MCF 10A (cell line): ENCODE measurements at regions of chr12 and their contacts with region 1.

Region 1: GRCh38 chr12:104286538-104287482 is 16.7 kb upstream of the EID3 start:
- DNase-seq: peak; percentile 99
- H3K4me3 Mint-ChIP-seq: peak overlapping the region; percentile 98
- H3K27ac Mint-ChIP-seq: peak overlapping the region; percentile 100
- H3K4me1 Mint-ChIP-seq: peaks cover 14% of the 10 kb centered on the region
- H3K27me3 Mint-ChIP-seq: no peaks in the 10 kb centered on the region
- CTCF ChIP-seq: no peak

Region 2: GRCh38 chr12:104137913-104138796 is 148.7 kb before region 1 on chr12 and contains the start of gene NFYB:
- CTCF ChIA-PET with region 1: interaction called, 4 read pairs
- POLR2A ChIA-PET with region 1: interaction called, 62 read pairs
- intact Hi-C with region 1: loop called (anchors 5 kb)
- DNase-seq: peak; percentile 99
- H3K4me3 Mint-ChIP-seq: peak within 1 kb of the TSS; percentile 78
- H3K27ac Mint-ChIP-seq: peak within 1 kb of the TSS; percentile 46
- H3K4me1 Mint-ChIP-seq: peaks cover 8% of the 10 kb centered on the region
- H3K27me3 Mint-ChIP-seq: no peaks in the 10 kb centered on the region
- CTCF ChIP-seq: no peak
- total RNA-seq, gene NFYB: 24.8 and 27.0 TPM in 2 replicates

Region 3: DNA sequence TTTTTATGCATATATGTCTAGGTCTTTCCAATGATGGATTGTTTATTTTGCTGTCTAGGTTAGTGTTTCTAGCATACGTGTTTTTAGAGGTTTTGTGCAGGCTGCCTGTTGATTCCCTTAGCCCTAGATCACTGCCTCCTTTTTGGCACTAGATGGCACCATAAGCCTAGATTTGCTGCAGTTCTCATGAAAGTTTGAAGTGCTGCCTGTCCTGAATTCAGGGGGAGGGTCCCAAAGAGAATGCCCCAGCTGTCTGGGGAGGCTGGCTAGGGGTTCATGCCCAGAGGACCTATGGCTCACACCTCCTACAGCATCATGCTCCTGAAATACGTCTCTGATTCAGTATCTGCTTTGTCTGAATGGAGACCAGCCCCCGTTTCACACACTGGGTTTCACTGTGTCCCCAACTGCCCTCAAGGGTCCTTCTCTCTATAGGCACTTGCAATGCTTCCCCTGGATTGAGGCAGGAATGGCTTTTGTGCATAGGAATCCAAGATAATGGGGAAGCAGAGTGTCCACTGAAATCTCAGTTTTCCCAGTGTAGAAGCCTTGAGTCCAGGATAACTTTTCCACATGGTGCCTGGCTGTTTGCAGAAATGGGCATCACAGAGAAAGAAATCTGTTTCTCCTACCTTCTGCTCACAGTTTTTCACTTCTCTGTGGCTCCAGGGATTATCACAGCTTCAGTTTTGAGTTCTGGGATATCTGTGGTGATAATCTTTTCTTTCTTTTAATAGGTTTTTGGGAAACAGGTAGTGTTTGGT is 85.4 kb before region 1 on chr12:
- CTCF ChIA-PET with region 1: interaction called, 25 read pairs
- POLR2A ChIA-PET with region 1: interaction called, 58 read pairs
- intact Hi-C with region 1: loop called (anchors 1 kb)
- DNase-seq: peak; percentile 74
- H3K4me3 Mint-ChIP-seq: no peak overlapping the region
- H3K27ac Mint-ChIP-seq: no peak overlapping the region
- H3K4me1 Mint-ChIP-seq: peaks cover 18% of the 10 kb centered on the region
- H3K27me3 Mint-ChIP-seq: no peaks in the 10 kb centered on the region
- CTCF ChIP-seq: peak; percentile 86

Region 4: DNA sequence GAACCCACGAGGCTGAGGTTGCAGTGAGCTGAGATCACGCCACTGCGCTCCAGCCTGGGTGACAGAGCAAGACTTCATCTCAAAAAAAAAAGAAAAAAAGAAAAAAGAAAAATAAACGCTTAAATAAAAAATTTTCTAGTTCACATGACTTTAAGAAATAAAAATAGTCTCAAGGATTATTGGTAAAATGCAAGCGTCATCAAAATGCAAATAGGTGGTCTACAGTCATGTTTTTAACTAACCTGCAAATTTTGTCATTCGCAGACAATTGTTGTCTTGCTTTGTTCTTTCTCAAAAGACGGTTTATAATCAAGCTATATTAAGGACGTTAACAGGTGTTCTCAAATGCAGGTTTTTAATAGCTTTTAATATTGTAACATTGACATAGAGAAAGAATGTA is 48.9 kb before region 1 on chr12:
- CTCF ChIA-PET with region 1: no interaction called
- POLR2A ChIA-PET with region 1: no interaction called
- intact Hi-C with region 1: no loop called
- DNase-seq: no peak
- H3K4me3 Mint-ChIP-seq: no peak overlapping the region
- H3K27ac Mint-ChIP-seq: no peak overlapping the region
- H3K4me1 Mint-ChIP-seq: no peaks in the 10 kb centered on the region
- H3K27me3 Mint-ChIP-seq: no peaks in the 10 kb centered on the region
- CTCF ChIP-seq: no peak

Region 5: GRCh38 chr12:104258476-104259067 is 28.2 kb before region 1 on chr12:
- CTCF ChIA-PET with region 1: interaction called, 8 read pairs
- POLR2A ChIA-PET with region 1: interaction called, 89 read pairs
- intact Hi-C with region 1: no loop called
- DNase-seq: no peak
- H3K4me3 Mint-ChIP-seq: no peak overlapping the region
- H3K27ac Mint-ChIP-seq: no peak overlapping the region
- H3K4me1 Mint-ChIP-seq: peaks cover 11% of the 10 kb centered on the region
- H3K27me3 Mint-ChIP-seq: no peaks in the 10 kb centered on the region
- CTCF ChIP-seq: no peak

Region 6: GRCh38 chr12:104276273-104277131 is 10.3 kb before region 1 on chr12:
- CTCF ChIA-PET with region 1: interaction called, 4 read pairs
- POLR2A ChIA-PET with region 1: interaction called, 51 read pairs
- intact Hi-C with region 1: no loop called
- DNase-seq: no peak
- H3K4me3 Mint-ChIP-seq: peak overlapping the region; percentile 27
- H3K27ac Mint-ChIP-seq: peak overlapping the region; percentile 69
- H3K4me1 Mint-ChIP-seq: peaks cover 40% of the 10 kb centered on the region
- H3K27me3 Mint-ChIP-seq: no peaks in the 10 kb centered on the region
- CTCF ChIP-seq: no peak

Region 7: GRCh38 chr12:104387190-104387589 is 100.4 kb after region 1 on chr12:
- CTCF ChIA-PET with region 1: no interaction called
- POLR2A ChIA-PET with region 1: no interaction called
- intact Hi-C with region 1: no loop called
- DNase-seq: no peak
- H3K4me3 Mint-ChIP-seq: no peak overlapping the region
- H3K27ac Mint-ChIP-seq: no peak overlapping the region
- H3K4me1 Mint-ChIP-seq: peaks cover 4% of the 10 kb centered on the region
- H3K27me3 Mint-ChIP-seq: no peaks in the 10 kb centered on the region
- CTCF ChIP-seq: no peak

Region 8: GRCh38 chr12:105107494-105108371 is 820.9 kb after region 1 on chr12 and contains the start of gene WASHC4:
- CTCF ChIA-PET with region 1: interaction called, 4 read pairs
- POLR2A ChIA-PET with region 1: interaction called, 37 read pairs
- intact Hi-C with region 1: no loop called
- DNase-seq: peak; percentile 93
- H3K4me3 Mint-ChIP-seq: peak within 1 kb of the TSS; percentile 96
- H3K27ac Mint-ChIP-seq: peak within 1 kb of the TSS; percentile 96
- H3K4me1 Mint-ChIP-seq: peaks cover 26% of the 10 kb centered on the region
- H3K27me3 Mint-ChIP-seq: no peaks in the 10 kb centered on the region
- CTCF ChIP-seq: no peak
- total RNA-seq, gene WASHC4: 44.5 and 47.6 TPM in 2 replicates